ENCODE measurements at regions of chr1 and their contacts with region 1.

Region 1: DNA sequence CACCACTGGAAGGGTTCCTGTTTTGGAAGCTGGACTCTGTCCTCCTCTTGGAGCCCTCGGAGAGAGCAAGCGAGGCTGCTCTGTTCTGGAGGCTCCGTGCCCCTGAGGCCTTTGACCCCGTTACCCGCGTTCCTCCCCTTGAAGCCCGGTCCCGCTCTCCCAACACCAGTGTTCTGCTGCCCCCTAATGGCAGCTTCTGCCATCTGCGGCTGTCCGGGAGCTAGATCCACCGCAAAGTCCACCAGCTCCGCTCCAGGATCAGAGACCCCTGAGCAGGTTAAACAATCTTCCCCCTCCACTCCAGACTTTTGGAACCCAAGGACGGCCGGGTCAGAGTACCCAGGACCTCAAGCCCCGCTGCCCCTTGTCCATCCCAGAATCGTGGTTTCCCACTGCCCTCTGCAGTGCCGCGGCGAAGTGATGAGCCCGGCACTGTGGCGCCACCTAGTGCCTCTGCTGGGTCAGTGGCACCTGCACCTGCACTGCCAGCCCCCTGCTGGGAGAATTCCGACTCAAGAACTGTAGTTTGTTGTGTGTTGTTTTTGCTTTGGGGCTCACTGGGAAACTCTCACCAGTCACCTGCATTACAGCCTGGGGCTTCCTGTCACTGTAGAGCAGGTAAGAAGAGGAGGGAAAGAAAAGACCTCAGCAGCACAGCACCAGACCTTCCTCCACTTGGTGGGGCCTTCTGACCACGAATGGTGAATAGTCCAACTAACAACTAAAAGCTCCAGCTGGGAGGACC is 63.5 kb upstream of the NFASC start:
- DNase-seq: peak; percentile 91
- ATAC-seq: peak; percentile 95
- H3K4me3 Mint-ChIP-seq: peak overlapping the region; percentile 76
- H3K27ac Mint-ChIP-seq: peak overlapping the region; percentile 73
- H3K4me1 Mint-ChIP-seq: peaks cover 11% of the 10 kb centered on the region
- H3K27me3 Mint-ChIP-seq: no peaks in the 10 kb centered on the region
- CTCF ChIP-seq: peak; percentile 6

Region 2: GRCh38 chr1:204431310-204432165 is 375.6 kb before region 1 on chr1:
- CTCF ChIA-PET with region 1: interaction called, 10 read pairs
- POLR2A ChIA-PET with region 1: no interaction called
- intact Hi-C with region 1: no loop called
- DNase-seq: peak; percentile 91
- ATAC-seq: peak; percentile 89
- H3K4me3 Mint-ChIP-seq: no peak overlapping the region
- H3K27ac Mint-ChIP-seq: no peak overlapping the region
- H3K4me1 Mint-ChIP-seq: peaks cover 3% of the 10 kb centered on the region
- H3K27me3 Mint-ChIP-seq: no peaks in the 10 kb centered on the region
- CTCF ChIP-seq: peak; percentile 91

Region 3: GRCh38 chr1:204516180-204516879 is 290.8 kb before region 1 on chr1 and contains the start of gene MDM4:
- CTCF ChIA-PET with region 1: interaction called, 10 read pairs
- POLR2A ChIA-PET with region 1: no interaction called
- intact Hi-C with region 1: no loop called
- DNase-seq: peak; percentile 98
- ATAC-seq: peak; percentile 88
- H3K4me3 Mint-ChIP-seq: no peak within 1 kb of the TSS
- H3K27ac Mint-ChIP-seq: no peak within 1 kb of the TSS
- H3K4me1 Mint-ChIP-seq: peaks cover 55% of the 10 kb centered on the region
- H3K27me3 Mint-ChIP-seq: no peaks in the 10 kb centered on the region
- CTCF ChIP-seq: no peak
- total RNA-seq, gene MDM4: 89.6 to 94.8 TPM

Region 4: GRCh38 chr1:204578867-204579664 is 228.0 kb before region 1 on chr1:
- CTCF ChIA-PET with region 1: interaction called, 26 read pairs
- POLR2A ChIA-PET with region 1: no interaction called
- intact Hi-C with region 1: no loop called
- DNase-seq: peak; percentile 49
- ATAC-seq: peak; percentile 82
- H3K4me3 Mint-ChIP-seq: peak overlapping the region; percentile 62
- H3K27ac Mint-ChIP-seq: peak overlapping the region; percentile 88
- H3K4me1 Mint-ChIP-seq: peaks cover 24% of the 10 kb centered on the region
- H3K27me3 Mint-ChIP-seq: no peaks in the 10 kb centered on the region
- CTCF ChIP-seq: no peak

Region 5: DNA sequence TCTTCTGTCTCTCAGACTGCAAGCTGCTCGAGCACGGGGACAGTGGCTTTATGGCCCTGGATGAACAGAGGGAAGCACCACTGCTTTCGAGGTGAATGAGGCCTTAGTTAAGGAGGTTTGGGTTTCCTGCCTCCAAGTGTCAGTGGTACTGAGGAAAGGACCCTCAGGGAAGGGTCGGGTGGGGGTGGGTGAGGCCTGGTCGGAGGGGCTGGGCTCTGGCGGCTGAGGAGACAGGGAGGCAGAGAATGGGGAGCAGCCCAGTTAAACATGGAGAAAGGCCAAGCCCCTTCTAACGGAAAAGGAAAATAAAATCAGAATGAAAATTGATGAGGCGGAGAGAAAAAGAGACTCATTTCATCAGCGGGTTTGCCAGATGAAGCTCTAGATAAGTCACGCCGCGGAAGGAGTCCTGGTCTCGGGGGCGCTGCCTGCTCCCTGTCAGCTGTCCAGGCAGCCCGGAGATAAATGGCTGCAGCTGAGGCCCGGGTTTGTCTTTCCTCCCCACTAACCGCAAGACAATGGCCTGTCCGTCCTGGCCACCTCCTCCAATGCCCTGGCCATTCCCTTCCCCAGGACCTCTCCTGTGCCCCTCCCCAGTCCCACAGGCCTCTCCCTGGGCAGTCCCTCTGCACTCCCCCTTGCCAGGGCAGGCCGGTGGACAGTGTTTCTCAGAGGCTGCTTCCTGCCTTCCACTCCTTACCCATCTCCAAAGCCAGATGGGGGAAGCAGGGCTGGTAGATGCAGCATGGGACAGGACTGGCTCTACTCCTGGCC is 176.8 kb before region 1 on chr1:
- CTCF ChIA-PET with region 1: interaction called, 12 read pairs
- POLR2A ChIA-PET with region 1: no interaction called
- intact Hi-C with region 1: no loop called
- DNase-seq: no peak
- ATAC-seq: no peak
- H3K4me3 Mint-ChIP-seq: no peak overlapping the region
- H3K27ac Mint-ChIP-seq: no peak overlapping the region
- H3K4me1 Mint-ChIP-seq: no peaks in the 10 kb centered on the region
- H3K27me3 Mint-ChIP-seq: peaks cover 9% of the 10 kb centered on the region
- CTCF ChIP-seq: no peak

Region 6: DNA sequence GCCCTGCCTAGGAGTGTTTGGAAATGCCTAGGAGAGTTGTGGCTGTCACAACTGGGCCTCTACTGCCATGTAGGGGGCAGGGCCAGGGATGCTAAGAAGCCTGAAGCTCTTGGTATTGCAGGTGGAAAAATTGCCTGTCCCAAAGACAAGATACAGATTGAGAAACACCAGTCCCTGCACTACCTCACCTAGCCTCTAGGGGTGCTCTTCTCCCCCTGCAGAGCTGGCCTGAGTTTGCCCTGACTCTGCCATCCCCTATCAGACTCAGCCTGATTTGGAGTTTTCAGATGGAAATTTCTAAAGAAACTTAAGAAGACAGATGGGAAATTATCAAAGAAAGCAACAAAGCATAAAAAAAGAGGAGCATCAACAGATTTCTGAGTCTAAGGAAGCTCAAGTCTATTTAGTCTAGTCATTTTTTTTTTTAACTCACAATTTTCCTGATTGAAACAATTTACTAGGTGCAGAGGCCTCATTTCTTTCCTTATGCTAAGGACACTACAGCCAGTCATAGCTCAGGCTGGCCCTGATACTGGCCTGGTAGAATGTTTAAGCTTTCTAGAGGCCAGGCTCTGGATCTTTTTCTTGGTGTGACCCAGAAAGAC is 60.2 kb before region 1 on chr1:
- CTCF ChIA-PET with region 1: interaction called, 43 read pairs
- POLR2A ChIA-PET with region 1: no interaction called
- intact Hi-C with region 1: no loop called
- DNase-seq: peak; percentile 68
- ATAC-seq: peak; percentile 99
- H3K4me3 Mint-ChIP-seq: no peak overlapping the region
- H3K27ac Mint-ChIP-seq: no peak overlapping the region
- H3K4me1 Mint-ChIP-seq: no peaks in the 10 kb centered on the region
- H3K27me3 Mint-ChIP-seq: peaks cover 6% of the 10 kb centered on the region
- CTCF ChIP-seq: peak; percentile 91

Region 7: GRCh38 chr1:204782118-204782700 is 24.9 kb before region 1 on chr1:
- CTCF ChIA-PET with region 1: interaction called, 19 read pairs
- POLR2A ChIA-PET with region 1: no interaction called
- intact Hi-C with region 1: no loop called
- DNase-seq: no peak
- ATAC-seq: no peak
- H3K4me3 Mint-ChIP-seq: no peak overlapping the region
- H3K27ac Mint-ChIP-seq: no peak overlapping the region
- H3K4me1 Mint-ChIP-seq: no peaks in the 10 kb centered on the region
- H3K27me3 Mint-ChIP-seq: peaks cover 19% of the 10 kb centered on the region
- CTCF ChIP-seq: no peak

Region 8: DNA sequence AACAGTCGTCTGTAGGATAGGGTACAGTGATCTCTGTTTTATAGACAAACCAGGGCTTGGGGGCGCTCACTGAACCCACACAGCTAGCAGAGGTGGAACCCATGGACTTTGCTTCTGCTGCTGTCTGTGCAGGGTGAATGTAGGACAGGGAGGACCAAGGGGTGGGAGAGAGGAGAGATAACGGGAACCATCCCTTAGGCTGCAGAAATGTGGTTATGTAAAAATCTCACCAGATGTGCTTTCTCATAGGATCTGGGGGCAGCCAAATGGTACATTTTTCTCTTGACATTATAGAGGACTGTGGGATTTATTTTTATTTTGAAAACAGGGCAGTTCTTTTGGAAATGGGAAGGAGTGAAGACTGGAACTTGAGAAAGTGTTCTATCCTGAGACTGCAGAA is 72.2 kb after region 1 on chr1:
- CTCF ChIA-PET with region 1: no interaction called
- POLR2A ChIA-PET with region 1: no interaction called
- intact Hi-C with region 1: no loop called
- DNase-seq: no peak
- ATAC-seq: no peak
- H3K4me3 Mint-ChIP-seq: no peak overlapping the region
- H3K27ac Mint-ChIP-seq: no peak overlapping the region
- H3K4me1 Mint-ChIP-seq: no peaks in the 10 kb centered on the region
- H3K27me3 Mint-ChIP-seq: peaks cover 12% of the 10 kb centered on the region
- CTCF ChIP-seq: no peak